ENCODE measurements at regions of chr6 and their contacts with region 1.

Region 1: GRCh38 chr6:113414511-113414910 is 442.6 kb upstream of the MARCKS start:
- DNase-seq: peak; percentile 82
- ATAC-seq: peak; percentile 98
- H3K4me3 ChIP-seq: no peak overlapping the region
- H3K27ac ChIP-seq: no peak overlapping the region
- H3K4me1 ChIP-seq: peaks cover 24% of the 10 kb centered on the region
- H3K27me3 ChIP-seq: no peaks in the 10 kb centered on the region
- CTCF ChIP-seq: peak; percentile 64

Region 2: GRCh38 chr6:112780498-112781096 is 633.9 kb before region 1 on chr6:
- CTCF ChIA-PET with region 1: no interaction called
- POLR2A ChIA-PET with region 1: no interaction called
- intact Hi-C with region 1: loop called (anchors 5 kb)
- DNase-seq: peak; percentile 79
- ATAC-seq: peak; percentile 85
- H3K4me3 ChIP-seq: no peak overlapping the region
- H3K27ac ChIP-seq: no peak overlapping the region
- H3K4me1 ChIP-seq: no peaks in the 10 kb centered on the region
- H3K27me3 ChIP-seq: no peaks in the 10 kb centered on the region
- CTCF ChIP-seq: peak; percentile 79

Region 3: GRCh38 chr6:113306552-113307145 is 107.9 kb before region 1 on chr6:
- CTCF ChIA-PET with region 1: no interaction called
- POLR2A ChIA-PET with region 1: no interaction called
- intact Hi-C with region 1: loop called (anchors 5 kb)
- DNase-seq: peak; percentile 68
- ATAC-seq: peak; percentile 64
- H3K4me3 ChIP-seq: no peak overlapping the region
- H3K27ac ChIP-seq: no peak overlapping the region
- H3K4me1 ChIP-seq: peaks cover 5% of the 10 kb centered on the region
- H3K27me3 ChIP-seq: no peaks in the 10 kb centered on the region
- CTCF ChIP-seq: peak; percentile 81

Region 4: GRCh38 chr6:113564371-113565161 is 150.1 kb after region 1 on chr6:
- CTCF ChIA-PET with region 1: no interaction called
- POLR2A ChIA-PET with region 1: no interaction called
- intact Hi-C with region 1: loop called (anchors 5 kb)
- DNase-seq: no peak
- ATAC-seq: no peak
- H3K4me3 ChIP-seq: no peak overlapping the region
- H3K27ac ChIP-seq: no peak overlapping the region
- H3K4me1 ChIP-seq: peaks cover 21% of the 10 kb centered on the region
- H3K27me3 ChIP-seq: no peaks in the 10 kb centered on the region
- CTCF ChIP-seq: no peak

Region 5: GRCh38 chr6:113642714-113643406 is 228.3 kb after region 1 on chr6:
- CTCF ChIA-PET with region 1: no interaction called
- POLR2A ChIA-PET with region 1: interaction called, 10 read pairs
- intact Hi-C with region 1: loop called (anchors 10 kb)
- DNase-seq: peak; percentile 67
- ATAC-seq: peak; percentile 76
- H3K4me3 ChIP-seq: no peak overlapping the region
- H3K27ac ChIP-seq: peak overlapping the region; percentile 39
- H3K4me1 ChIP-seq: peaks cover 35% of the 10 kb centered on the region
- H3K27me3 ChIP-seq: no peaks in the 10 kb centered on the region
- CTCF ChIP-seq: no peak

Measured in PC-3 (cell line).